GM13977 (cell line): ENCODE measurements at regions of chr1 and their contacts with region 1.

Region 1: GRCh38 chr1:92599184-92599583 is 112.5 kb upstream of the GFI1 start:
- DNase-seq: peak; percentile 39
- CTCF ChIP-seq: peak; percentile 53

Region 2: GRCh38 chr1:92306020-92306419 is 293.2 kb before region 1 on chr1:
- in situ Hi-C with region 1: loop called (anchors 5 kb)
- DNase-seq: no peak
- CTCF ChIP-seq: no peak

Region 3: GRCh38 chr1:92485381-92486257 is 113.6 kb before region 1 on chr1:
- in situ Hi-C with region 1: loop called (anchors 10 kb)
- DNase-seq: peak; percentile 79
- CTCF ChIP-seq: peak; percentile 66